ENCODE measurements at regions of chr11 and their contacts with region 1.

Region 1: DNA sequence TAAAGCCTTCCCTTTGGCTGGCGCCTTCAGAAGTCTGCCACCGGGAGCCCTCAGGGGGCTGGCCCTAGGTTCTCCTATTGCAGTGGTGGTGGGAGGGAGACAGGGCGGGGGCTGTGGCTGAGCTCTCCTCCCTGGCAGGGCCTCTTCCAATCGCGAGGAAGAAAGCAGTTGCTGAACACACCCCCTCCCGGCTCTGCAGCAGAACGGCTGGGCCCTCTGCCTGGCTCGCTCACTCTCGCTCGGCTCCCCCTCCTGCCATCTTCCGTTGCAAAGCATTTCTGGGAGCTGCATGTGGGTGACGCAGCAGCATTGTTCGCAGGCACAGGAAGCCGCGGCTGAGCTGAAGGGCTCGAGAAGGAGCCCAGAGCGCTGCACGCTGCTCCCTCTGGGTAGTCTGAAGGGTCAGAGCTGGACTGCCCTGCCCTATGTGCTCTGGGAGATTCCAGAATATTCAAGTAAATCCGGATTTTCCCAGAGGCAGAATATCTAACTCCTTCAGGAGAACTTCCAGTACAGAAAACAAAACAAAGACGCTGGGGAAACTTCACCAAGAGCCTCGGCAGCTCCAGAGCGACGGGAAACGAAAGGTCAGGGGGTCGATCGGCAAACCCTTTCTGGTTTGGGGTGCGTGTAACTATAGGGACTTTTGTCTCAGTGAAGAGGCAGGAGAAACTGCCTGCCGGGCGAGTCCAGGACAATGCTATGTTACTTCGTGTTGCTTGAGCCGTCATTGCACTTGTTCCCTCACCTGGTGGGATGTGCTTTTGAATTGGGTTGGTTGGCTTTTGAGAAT is 26.3 kb upstream of the GRK2 start:
- DNase-seq: peak; percentile 99
- H3K4me3 ChIP-seq: peak overlapping the region; percentile 58 to 85 (median 65)
- H3K27ac ChIP-seq: peak overlapping the region; percentile 96
- H3K4me1 ChIP-seq: peaks cover 24% of the 10 kb centered on the region
- H3K27me3 ChIP-seq: no peaks in the 10 kb centered on the region
- CTCF ChIP-seq: no peak

Region 2: DNA sequence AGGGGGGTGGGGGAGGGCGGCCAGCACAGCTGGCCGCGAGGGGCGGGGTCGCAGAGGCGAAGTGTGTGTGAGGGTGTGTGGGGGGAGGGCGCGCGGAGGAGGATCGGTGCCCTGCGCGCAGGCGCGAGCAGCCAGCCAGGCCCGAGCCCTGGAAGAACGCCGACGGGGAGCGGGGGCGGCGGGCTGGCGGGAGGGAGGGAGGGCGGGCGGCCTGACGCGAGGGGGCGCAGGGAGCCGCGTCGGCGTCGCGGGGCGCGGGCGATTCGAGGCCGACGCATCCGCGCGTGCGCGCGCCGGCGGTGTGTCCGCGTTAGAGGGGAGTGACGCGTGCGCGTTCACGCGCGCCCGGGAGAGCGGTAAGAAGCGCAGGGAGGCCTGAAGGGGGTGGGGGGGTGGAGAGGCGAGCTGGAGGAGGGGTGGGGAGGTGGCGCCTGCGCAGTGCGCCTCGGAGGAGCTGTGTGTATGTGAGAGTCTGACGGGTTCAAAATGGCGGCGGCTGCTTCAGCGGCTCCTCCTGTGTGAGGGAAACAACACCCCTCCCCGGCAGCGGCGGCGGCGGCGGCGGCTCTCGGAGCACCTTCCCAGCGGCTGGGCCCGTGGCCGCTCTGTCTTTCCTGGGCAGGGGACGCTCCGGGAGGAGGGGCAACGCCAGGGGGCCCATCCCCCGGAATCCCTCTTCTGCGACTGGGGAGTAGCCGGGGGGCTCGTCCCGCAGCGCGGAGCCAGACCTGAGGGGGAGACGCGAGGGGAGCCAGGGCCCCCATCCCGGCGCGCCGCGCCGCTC is 121.0 kb before region 1 on chr11 and contains the start of gene KDM2A:
- CTCF ChIA-PET with region 1: no interaction called
- dilution Hi-C with region 1: no loop called
- in situ Hi-C with region 1: no loop called
- intact Hi-C with region 1: loop called (anchors 5 kb)
- DNase-seq: peak; percentile 97
- H3K4me3 ChIP-seq: peak within 1 kb of the TSS; percentile 82 to 90 (median 85)
- H3K27ac ChIP-seq: peak within 1 kb of the TSS; percentile 84
- H3K4me1 ChIP-seq: peaks cover 14% of the 10 kb centered on the region
- H3K27me3 ChIP-seq: no peaks in the 10 kb centered on the region
- CTCF ChIP-seq: no peak
- total RNA-seq, gene KDM2A: 41.8 to 59.7 TPM

Region 3: GRCh38 chr11:67252831-67253239 is 12.9 kb after region 1 on chr11:
- CTCF ChIA-PET with region 1: no interaction called
- dilution Hi-C with region 1: no loop called
- in situ Hi-C with region 1: no loop called
- intact Hi-C with region 1: loop called (anchors 1 kb)
- DNase-seq: peak; percentile 49
- H3K4me3 ChIP-seq: no peak overlapping the region
- H3K27ac ChIP-seq: peak overlapping the region; percentile 34
- H3K4me1 ChIP-seq: peaks cover 32% of the 10 kb centered on the region
- H3K27me3 ChIP-seq: no peaks in the 10 kb centered on the region
- CTCF ChIP-seq: peak; percentile 70 to 80

Measured in mammary epithelial cell (primary cell).